ENCODE measurements at regions of chr17 and their contacts with region 1.

Region 1: DNA sequence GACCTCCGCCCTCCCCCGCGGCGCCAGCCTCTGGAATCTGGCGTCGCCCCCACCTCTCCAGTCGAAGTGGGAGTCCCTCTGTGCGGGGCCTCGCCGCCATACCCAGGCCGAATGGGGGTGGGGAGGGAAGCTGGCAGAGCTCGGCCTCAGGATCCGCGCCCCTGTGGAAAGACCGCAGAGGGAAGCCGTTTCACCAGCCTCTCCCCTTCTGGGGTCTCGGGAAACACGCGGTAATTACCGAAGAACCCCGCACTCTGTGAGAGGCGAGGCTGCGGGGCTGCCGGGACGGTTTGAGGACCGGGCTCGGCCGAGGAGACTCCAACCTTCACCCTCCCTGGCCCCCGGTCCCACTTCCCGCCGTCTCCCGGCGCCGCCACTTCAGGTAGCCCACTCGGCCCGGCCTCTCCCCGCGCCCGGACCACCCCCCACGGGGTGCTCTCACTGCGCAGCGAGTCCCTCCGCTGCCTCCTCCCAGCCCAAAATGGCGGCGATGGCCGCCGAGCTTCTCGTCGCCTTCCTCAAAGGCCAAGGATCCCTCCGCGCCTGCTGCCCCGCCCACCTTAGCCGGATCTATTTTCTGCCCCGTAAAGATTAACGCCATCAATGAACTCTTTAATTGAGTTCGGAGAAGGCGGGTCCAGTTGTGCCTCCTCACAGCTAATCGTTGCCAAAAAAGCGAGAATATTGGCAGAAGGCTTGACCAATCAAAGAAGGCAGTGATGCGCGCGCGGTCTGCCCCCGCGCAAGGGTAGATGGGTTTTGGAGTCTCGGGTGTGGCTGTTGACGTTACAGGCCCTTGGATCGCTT is 453 bp upstream of the HEXIM2 start:
- DNase-seq: peak; percentile 100
- H3K4me3 ChIP-seq: peak overlapping the region; percentile 83 to 93 (median 86)
- H3K27ac ChIP-seq: peak overlapping the region; percentile 97
- H3K4me1 ChIP-seq: peaks cover 11% of the 10 kb centered on the region
- H3K27me3 ChIP-seq: no peaks in the 10 kb centered on the region
- CTCF ChIP-seq: no peak

Region 2: GRCh38 chr17:44919885-44920564 is 241.2 kb before region 1 on chr17:
- CTCF ChIA-PET with region 1: no interaction called
- dilution Hi-C with region 1: no loop called
- in situ Hi-C with region 1: no loop called
- intact Hi-C with region 1: no loop called
- DNase-seq: peak; percentile 66
- H3K4me3 ChIP-seq: no peak overlapping the region
- H3K27ac ChIP-seq: no peak overlapping the region
- H3K4me1 ChIP-seq: peaks cover 30% of the 10 kb centered on the region
- H3K27me3 ChIP-seq: no peaks in the 10 kb centered on the region
- CTCF ChIP-seq: peak; percentile 82 to 90

Region 3: DNA sequence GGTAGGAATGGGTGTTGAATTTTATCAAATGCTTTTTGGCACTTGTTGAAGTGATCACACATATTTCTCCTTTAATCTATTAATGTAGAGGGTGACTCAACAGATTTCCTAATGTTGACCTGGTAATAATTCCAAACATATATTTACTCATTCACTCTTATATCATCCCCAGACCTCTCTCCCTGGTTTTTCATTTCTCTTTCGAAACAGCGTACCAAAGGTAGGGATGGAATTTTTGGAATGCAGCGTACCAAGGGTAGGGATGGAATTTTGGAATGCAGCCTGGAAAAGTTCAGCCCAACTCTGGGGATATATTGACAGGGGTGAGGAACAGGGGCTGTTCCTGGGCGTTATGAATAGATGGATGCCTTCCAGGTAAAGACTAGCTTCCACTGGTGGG is 220.9 kb before region 1 on chr17:
- CTCF ChIA-PET with region 1: no interaction called
- dilution Hi-C with region 1: no loop called
- in situ Hi-C with region 1: no loop called
- intact Hi-C with region 1: no loop called
- DNase-seq: peak; percentile 49
- H3K4me3 ChIP-seq: no peak overlapping the region
- H3K27ac ChIP-seq: peak overlapping the region; percentile 67
- H3K4me1 ChIP-seq: peaks cover 31% of the 10 kb centered on the region
- H3K27me3 ChIP-seq: no peaks in the 10 kb centered on the region
- CTCF ChIP-seq: no peak

Region 4: DNA sequence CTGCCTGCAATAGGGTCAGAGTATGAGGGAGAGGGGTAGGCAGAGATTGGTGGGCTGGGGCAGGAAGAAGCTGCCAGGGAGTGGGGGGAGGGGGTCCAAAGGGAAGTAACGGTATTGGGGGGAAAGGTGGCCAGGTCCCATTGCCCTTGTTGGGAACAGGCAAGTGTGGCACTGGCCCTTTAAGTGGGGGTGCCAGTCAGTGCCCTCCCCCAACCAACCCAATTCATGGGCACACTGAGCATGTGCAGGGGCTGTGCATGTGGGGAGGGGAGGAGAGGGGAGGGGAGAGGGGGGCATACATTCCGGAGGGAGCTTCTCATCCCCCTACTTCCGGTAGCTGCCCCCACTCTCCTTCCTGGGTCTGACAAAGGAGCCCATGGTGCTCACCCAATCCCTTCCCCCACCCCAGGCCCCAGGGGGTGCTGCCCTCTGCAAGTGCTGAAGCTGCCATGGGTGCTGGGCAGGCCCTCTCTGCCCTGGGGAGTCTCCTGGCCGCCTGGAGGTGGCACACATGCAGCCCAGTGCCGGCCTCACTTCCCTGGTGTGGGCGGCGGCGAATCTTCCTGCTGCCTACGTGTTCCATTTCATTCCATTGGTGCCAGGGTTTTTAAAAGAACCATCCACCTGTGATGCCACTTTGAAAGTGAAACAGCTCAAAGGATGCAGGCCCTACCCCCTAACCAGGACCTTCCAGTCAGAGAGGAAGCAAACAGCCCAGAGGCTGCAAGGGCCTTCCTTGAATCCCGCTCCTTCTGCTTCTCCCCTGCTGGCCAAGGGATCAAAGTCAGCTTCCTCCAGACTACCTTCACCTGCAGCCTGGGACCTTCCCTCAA is 11.4 kb after region 1 on chr17:
- CTCF ChIA-PET with region 1: no interaction called
- dilution Hi-C with region 1: no loop called
- in situ Hi-C with region 1: no loop called
- intact Hi-C with region 1: loop called (anchors 1 kb)
- DNase-seq: peak; percentile 96
- H3K4me3 ChIP-seq: peak overlapping the region; percentile 40 to 58 (median 49)
- H3K27ac ChIP-seq: peak overlapping the region; percentile 99
- H3K4me1 ChIP-seq: peaks cover 55% of the 10 kb centered on the region
- H3K27me3 ChIP-seq: no peaks in the 10 kb centered on the region
- CTCF ChIP-seq: peak; percentile 13 to 46

Region 5: DNA sequence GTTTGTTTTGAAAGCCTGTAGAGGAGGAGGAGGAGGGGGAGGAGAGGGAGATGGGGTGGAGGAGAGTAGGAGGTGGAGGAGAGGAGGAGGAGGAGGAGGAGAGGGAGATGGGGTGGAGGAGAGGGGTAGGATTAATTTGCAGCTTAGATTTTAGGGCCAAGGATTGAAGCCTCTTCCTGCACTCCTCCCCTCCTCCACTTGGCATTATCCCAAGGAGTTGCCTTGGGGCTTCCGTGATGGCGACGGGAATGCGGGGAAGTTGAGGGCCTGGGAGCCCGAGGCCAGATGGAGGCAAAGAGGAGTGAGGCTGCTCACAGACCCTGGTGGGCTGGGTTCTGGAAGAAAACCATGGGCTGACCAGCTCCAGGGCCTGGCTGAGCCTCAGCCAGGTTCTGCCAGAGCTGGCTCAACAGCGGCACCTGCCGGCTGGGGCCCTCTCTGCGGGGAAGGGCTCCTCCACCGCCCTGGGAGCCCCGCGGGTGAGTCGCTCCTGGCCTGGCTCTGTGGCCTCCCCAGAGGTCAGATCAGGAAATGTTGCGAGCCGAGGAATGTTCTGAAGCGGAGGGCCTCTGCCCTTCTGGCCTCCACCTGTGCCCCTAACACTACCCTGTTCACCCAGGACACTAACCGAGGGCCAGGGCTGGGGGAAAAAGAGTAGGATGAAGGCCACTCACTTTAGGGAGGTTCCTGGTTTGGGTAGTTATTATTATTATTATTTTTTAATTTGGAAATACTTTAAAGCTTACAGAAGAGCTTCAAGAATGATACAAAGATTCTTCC is 36.5 kb after region 1 on chr17:
- CTCF ChIA-PET with region 1: interaction called, 4 read pairs
- dilution Hi-C with region 1: no loop called
- in situ Hi-C with region 1: loop called in 1 of 2 experiments (anchors 5 kb)
- intact Hi-C with region 1: no loop called
- DNase-seq: peak; percentile 78
- H3K4me3 ChIP-seq: peak overlapping the region in 1 of 3 experiments; percentile 20
- H3K27ac ChIP-seq: no peak overlapping the region
- H3K4me1 ChIP-seq: peaks cover 16% of the 10 kb centered on the region
- H3K27me3 ChIP-seq: no peaks in the 10 kb centered on the region
- CTCF ChIP-seq: peak; percentile 93 to 99